Breast epithelium (tissue), 4 donors: ENCODE measurements at regions of chr19 and their contacts with region 1.

Region 1: DNA sequence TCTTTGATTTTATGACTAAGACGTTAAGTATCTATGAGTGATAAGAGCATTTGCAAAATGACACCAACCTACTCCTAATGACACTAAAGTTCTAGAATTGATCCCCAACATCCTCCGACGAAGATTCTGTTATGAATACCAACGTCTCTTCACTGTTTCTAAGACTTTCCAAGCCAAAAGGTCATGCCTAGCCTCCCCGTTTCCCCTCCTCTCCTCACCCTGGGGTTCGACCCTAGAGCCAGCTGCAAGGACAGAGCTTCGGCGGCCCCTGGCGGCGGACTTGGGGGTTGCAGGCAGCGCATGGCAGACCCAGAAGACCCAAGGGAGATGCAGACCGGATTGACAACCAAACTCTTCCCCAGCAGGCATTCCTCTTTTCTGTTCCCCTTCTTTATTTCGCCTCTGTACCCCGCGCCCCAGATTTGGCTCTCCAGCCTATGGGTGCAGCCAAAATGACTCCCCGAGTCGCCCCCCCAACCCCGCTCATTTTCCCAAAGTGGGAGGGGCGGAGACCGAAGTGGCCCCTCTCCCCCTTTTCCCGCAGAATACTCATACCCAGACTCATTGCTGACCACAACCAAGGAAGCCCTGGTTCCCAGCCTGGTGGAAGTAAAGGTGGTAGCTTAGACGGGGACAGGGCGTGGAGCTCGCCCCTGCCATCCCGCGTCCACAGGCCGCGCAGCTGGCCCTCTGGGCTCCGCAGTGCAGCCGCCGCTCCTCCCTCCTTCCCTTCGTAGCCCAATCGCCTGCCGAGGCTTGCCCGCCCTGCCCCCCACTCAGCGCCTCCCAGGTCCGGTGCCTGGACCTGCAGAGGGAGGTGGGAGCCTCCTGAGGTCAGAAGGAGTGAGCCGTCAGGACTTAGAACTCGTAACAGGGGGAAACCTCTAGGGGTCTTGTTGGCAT is 4.1 kb upstream of the EML2 start:
- DNase-seq: peak; percentile 75 to 83
- H3K4me3 ChIP-seq: peak overlapping the region in 2 of 3 donors; percentile 25 to 32
- H3K27ac ChIP-seq: no peak overlapping the region
- H3K4me1 ChIP-seq: peaks cover 0 to 14% of the 10 kb centered on the region in 2 donors
- H3K27me3 ChIP-seq: no peaks in the 10 kb centered on the region
- CTCF ChIP-seq: peak; percentile 98 to 99 (median 98)
- POLR2A ChIP-seq: no peak

Region 2: GRCh38 chr19:45340232-45340898 is 302.9 kb before region 1 on chr19 and contains the start of gene KLC3:
- intact Hi-C with region 1: no loop called
- DNase-seq: no peak
- H3K4me3 ChIP-seq: peak within 1 kb of the TSS in 2 of 3 donors; percentile 63 to 74
- H3K27ac ChIP-seq: peak within 1 kb of the TSS; percentile 71 to 78
- H3K4me1 ChIP-seq: no peaks in the 10 kb centered on the region
- H3K27me3 ChIP-seq: peaks cover 0 to 11% of the 10 kb centered on the region in 2 donors
- CTCF ChIP-seq: no peak
- POLR2A ChIP-seq: no peak
- total RNA-seq, gene KLC3: 5.6 to 13.5 TPM in 2 of 3 donors, not detected in the other

Region 3: DNA sequence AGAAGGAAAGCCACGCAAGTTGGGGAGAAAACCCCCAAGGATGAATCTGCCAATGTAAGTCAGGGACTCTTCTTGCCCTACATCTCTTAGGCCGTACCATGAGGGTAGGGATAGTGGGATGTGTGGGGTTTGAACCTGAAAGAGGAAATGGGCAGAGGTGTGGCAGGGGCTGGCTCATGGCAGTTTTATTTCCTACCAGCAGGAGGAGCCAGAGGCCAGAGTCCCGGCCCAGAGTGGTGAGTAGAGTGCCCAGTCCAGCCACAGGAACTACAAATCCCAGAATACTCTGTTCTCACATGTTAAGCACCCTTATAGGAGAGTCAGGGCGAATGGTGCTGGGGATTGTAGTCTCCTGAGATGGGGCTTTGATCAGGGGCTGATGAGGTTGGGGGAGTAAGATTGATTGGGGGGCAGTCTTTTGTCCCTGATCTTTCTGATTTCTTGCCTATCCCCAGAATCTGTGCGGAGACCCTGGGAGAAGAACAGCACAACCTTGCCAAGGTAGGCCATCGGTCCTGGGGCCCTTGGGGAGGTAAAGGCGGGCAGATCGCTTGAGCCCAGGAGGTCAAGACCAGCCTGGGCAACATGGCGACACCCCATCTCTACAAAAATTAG is 119.5 kb before region 1 on chr19:
- intact Hi-C with region 1: loop called (anchors 10 kb)
- DNase-seq: peak; percentile 80 to 84
- H3K4me3 ChIP-seq: no peak overlapping the region
- H3K27ac ChIP-seq: peak overlapping the region; percentile 8 to 36
- H3K4me1 ChIP-seq: no peaks in the 10 kb centered on the region
- H3K27me3 ChIP-seq: no peaks in the 10 kb centered on the region
- CTCF ChIP-seq: peak; percentile 88 to 96 (median 91)
- POLR2A ChIP-seq: no peak

Region 4: DNA sequence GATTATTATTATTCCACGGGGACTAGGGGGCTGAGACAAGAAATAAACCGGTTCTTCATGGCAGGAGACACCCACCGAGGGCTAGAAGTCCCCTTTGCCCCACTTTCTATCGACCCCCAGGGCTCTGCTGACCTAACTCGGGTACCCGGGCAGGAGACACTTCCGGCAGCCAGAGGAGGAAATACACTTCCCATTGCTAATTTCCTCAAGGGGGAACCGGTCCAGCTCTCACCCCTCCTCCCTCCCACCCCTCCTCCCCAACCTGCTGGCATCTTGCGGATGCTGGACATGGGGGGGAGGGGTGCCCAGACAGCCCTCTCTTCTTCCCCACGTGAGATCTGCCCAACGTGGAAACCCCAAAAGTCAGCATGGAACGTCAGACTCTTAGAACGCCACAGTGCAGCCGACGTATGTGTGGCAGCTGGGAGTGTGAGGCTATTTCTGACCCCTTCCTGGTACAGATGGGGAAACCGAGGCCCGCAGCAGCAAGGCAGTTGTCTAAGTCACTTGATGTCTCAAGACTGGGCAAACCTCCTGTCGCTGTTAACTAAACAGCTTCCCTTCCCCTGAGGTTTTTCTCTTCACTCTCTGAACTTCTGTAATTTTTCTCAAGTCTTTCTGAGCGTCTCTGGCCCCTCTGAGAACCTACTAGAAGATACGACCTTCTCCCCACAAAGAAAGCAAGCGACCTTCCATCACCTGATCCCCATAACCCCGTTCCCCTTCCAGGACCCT is 44.8 kb before region 1 on chr19:
- intact Hi-C with region 1: loop called (anchors 5 kb)
- DNase-seq: no peak
- H3K4me3 ChIP-seq: peak overlapping the region in 1 of 3 donors; percentile 54
- H3K27ac ChIP-seq: peak overlapping the region in 1 of 2 donors; percentile 48
- H3K4me1 ChIP-seq: no peaks in the 10 kb centered on the region
- H3K27me3 ChIP-seq: peaks cover 0 to 60% of the 10 kb centered on the region in 2 donors
- CTCF ChIP-seq: no peak
- POLR2A ChIP-seq: no peak